GM10248 (cell line): ENCODE measurements at regions of chr1 and their contacts with region 1.

Region 1: GRCh38 chr1:1906185-1907097 is 8.6 kb upstream of the CALML6 start:
- DNase-seq: peak; percentile 83
- CTCF ChIP-seq: peak; percentile 98

Region 2: GRCh38 chr1:1291548-1292441 is 614.6 kb before region 1 on chr1:
- CTCF ChIA-PET with region 1: no interaction called
- POLR2A ChIA-PET with region 1: no interaction called
- DNase-seq: peak; percentile 81
- CTCF ChIP-seq: peak; percentile 81

Region 3: DNA sequence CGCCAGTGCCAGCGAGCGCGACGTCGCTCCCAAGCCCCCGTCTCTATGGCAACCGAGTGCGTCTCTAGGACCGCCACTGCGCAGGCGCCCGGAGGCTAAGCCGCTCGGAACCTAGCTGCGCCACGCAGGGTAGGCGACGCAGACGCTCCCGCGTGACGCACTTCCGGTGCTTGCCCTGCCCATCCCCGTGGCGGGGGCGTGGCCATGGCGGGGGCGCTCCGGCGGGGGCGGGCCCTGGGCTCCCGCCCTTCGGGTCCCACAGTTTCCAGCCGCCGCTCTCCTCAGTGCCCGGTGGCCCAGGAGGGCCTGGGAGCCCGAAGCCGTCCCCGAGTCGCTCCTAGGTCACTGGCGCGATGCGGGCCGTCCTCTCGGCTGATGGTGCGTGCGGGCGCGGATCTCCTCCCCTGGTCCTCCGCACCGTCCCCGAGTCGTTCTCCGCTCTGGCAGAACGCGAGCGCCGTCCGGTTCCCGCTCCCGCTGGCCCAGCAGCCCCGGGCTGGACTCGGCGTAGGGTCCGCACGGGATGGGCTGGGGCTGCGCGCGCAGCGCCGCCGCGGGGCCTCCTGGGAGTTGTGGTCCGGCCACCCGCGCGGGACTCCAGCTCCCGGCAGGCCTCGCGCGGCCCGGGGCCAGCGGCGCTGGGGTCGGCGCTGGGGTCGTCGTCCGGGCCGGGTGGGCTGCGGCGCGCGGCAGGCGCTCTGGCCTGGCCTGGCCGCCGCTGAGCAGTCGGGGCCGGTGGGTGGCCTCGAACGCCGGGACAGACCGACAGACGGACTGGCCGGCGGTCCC is 291.0 kb before region 1 on chr1 and contains the start of gene MIB2:
- CTCF ChIA-PET with region 1: no interaction called
- POLR2A ChIA-PET with region 1: no interaction called
- DNase-seq: peak; percentile 100
- CTCF ChIP-seq: no peak

Region 4: DNA sequence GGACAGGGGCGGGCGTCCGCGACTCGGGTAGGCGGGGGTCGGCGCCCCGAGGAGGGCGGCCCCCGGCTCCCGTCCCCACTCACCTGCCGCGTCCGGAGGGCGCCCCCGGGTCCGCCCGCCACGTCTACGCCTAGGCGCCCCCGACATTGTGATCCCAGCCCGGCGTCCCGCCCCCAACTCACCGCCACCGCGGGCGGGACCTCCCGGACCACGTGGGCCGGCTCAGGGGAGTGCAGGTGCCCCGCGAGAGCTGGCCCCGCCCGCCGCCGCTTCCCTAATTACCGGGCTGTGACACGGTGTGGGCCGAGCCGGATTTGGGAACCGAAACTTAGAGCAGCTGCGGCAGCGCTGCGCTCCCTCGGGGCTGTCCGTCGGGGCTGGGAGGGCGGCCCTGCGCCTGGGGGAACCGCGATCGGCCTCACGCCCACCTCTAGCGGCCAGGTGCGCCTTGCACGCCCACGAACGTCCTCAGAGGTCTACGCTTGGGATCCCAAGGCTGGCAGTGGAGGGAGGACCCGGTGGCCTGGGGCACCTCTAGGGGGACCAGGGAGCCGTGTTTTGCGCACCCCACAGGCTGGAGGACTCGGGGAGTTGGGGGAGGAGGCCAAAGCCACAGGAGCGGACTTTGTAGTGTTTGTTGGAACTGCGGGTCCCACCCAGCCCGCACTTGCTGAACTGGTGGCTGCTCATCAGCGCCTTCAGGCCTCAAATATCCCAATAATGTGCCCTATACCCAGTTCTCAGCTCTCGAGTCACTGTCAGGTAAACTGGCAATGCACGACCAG is 127.6 kb before region 1 on chr1:
- CTCF ChIA-PET with region 1: interaction called, 12 read pairs
- POLR2A ChIA-PET with region 1: interaction called, 3 read pairs
- DNase-seq: peak; percentile 93
- CTCF ChIP-seq: peak; percentile 44

Region 5: GRCh38 chr1:1826356-1827088 is 79.9 kb before region 1 on chr1:
- CTCF ChIA-PET with region 1: interaction called, 10 read pairs
- POLR2A ChIA-PET with region 1: no interaction called
- DNase-seq: no peak
- CTCF ChIP-seq: no peak

Region 6: DNA sequence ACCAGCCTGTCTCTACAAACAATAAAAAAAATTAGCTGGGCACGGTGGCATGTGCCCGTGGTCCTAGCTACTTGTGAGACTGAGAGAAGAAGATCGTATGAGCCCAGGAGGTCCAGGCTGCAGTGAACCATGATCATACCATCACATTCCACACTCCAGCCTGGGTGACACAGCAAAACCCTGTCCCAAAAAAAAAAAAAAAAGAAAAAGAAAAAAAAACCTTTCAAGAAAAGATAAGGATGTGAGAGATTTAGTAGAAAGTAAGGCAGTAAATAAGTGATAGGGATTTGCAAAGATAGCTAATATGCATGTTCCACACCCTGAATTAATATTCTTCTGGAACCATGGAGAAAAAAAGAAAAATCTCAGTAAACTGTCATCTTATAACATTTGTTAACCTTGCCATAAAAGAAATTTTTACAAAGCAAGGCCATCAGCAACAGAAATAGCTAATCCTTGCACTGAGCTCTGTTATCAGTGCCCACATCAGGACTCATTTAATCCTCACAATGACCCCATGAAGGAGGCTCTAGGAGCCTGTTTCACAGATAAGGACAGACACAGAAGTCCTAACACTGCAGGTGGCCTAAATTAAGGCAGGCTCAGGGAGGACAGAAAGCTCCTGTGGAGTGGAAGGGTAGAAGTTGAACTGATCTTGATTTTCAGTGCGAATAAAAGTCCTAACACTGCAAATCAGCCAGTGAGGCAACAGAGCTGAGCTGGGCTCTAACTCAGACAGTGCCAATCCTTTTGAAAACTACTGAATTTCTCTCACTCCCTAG is 23.2 kb before region 1 on chr1:
- CTCF ChIA-PET with region 1: interaction called, 10 read pairs
- POLR2A ChIA-PET with region 1: no interaction called
- DNase-seq: no peak
- CTCF ChIP-seq: no peak